GM13976 (cell line): ENCODE measurements at regions of chr21 and their contacts with region 1.

Region 1: DNA sequence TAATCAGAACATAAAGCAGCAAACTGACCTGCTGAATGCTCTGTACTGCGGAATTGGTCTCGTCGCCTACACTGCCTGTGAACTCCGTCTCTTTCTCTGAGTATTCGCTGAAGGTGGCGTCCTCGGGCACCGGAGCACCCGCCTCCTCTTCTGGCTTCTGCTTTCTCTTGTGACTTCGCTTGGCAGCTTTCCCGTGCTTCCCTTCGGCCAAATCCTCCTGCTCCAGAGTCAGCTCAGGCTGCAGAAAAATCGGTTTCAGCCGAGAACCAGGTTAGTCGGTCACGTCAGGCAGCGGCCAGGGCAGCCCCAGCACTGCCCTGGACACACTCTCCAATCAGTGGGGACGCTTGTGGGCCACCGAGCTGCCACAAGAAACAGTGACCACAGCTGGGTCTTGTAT is 35.8 kb upstream of the RIPK4 start:
- DNase-seq: no peak
- CTCF ChIP-seq: no peak

Region 2: DNA sequence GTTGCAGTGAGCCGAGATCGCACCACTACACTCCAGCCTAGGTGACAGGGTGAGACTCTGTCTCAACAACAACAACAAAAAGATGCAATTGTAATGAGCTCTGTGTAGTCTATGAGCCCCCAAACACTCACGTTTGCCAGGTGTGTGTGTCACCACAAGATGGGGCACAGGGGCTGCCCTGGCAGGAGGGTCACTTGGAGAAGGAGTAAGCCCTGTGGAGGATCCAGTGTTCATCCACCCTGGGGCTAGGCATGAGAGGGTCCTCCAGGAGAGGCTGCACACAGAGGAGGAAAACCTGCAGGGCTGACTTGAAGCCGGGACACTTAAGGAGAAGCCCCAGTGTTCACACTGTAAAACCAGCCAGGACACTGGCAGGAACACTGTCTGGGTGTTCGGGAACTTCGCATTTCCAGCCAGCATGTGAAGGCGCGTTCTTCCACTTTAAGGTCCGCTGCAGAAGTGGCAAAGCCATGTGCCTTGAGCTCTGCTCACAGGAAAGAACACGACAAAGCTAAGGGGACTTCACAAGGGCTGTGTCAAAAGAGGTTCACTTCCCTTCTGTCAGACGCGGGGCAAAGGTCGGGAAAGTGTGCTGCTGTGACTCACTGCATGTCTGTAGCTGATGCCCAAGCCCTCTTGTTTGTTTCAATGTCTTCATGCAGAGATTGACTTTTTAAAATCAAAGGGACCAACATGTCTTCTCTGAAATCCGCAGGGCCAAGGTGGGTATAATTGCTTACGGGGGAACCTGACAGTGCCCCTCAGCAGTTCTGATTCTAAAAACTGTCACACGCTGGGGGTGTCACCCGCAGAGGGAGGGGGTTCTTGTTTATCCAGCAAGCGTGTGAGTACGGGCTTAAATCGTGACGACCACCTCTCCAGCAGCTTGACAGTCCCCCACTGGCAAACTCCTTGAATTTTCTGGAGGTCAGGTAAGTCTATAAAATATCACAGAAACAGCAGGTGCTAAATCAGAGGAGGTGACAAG is 138.6 kb before region 1 on chr21:
- in situ Hi-C with region 1: no loop called
- DNase-seq: no peak
- CTCF ChIP-seq: no peak

Region 3: GRCh38 chr21:42117229-42117966 is 314.7 kb after region 1 on chr21:
- in situ Hi-C with region 1: loop called (anchors 10 kb)
- DNase-seq: peak; percentile 83
- CTCF ChIP-seq: peak; percentile 83